ENCODE measurements at regions of chr16 and their contacts with region 1.

Region 1: DNA sequence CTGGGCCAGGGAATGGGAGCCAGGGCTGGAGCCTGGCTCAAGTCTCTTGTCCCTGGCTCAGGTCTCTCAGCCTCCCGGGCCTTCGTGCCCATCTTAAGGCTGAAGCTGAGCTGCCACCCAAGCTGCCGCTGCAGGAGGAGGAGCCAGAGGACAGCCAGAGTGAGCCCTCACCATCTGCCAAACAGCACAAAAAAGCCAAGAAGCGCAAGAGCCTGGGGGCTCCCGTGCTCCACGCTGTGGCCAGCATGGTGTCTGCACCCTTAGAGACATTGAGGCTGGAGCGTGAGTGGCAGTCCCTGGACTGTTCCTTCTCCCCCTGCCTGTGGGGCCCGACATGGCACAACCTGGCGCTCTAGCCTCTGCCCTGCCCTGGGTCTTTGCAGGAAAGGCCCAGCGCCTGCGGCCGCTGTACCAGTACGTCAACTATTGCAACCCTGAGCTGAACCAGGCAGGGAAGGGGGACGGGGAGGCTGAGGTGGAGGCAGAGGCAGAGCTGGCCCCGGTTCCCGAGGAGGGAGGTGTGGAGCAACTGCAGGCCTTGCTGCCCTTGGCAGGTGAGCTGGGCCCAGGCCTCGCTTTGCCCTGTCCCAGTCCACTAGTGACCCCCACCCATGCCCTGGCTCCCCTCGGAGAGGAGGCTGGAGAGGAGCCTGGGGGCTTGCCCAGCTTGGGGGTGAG is 1.3 kb downstream of the C16orf86 start:
- DNase-seq: peak; percentile 70
- ATAC-seq: peak; percentile 88
- H3K4me3 ChIP-seq: no peak overlapping the region
- H3K27ac ChIP-seq: no peak overlapping the region
- H3K4me1 ChIP-seq: peaks cover 34% of the 10 kb centered on the region
- H3K27me3 ChIP-seq: no peaks in the 10 kb centered on the region
- CTCF ChIP-seq: peak; percentile 91 to 94 (median 92)
- EP300 ChIP-seq: no peak
- POLR2A ChIP-seq: no peak
- RAD21 ChIP-seq: peak; percentile 67

Region 2: DNA sequence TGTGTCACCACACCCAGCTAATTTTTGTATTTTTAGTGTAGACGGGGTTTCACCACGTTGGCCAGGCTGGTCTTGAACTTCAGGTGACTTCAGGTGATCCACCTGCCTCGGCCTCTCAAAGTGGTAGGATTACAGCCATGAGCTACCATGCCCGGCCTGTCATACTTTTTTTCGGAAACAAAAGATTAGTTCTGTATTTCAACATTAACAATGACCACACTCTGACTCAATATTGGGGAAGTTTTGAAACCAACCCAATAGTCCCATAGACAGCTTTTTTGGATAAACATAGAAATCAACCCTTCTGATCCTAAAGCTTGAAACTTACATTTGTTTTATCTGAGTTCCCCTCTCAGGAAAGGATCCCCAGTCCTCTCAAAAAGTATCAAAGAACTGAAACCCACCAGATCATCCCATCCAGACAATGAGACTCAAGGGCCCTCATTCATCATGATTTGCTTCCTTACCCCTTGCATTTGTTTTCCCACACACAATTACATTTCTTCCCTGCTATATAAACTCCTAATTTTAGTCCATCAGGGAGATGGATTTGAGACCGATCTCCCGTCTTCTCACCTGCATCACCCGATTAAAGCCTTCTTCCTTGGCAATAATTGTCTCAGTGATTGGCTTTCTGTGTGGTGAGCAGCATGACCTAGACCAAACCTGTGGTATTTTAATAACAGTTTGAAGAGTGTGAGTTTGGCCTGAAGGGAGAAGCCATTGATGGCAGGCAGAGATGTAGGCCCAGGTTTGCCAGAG is 177.4 kb before region 1 on chr16:
- CTCF ChIA-PET with region 1: interaction called, 12 read pairs
- POLR2A ChIA-PET with region 1: interaction called, 3 read pairs
- RAD21 ChIA-PET with region 1: no interaction called
- SMC1A ChIA-PET with region 1: interaction called, 3 read pairs
- in situ Hi-C with region 1: no loop called
- intact Hi-C with region 1: loop called (anchors 5 kb)
- DNase-seq: no peak
- ATAC-seq: no peak
- H3K4me3 ChIP-seq: no peak overlapping the region
- H3K27ac ChIP-seq: no peak overlapping the region
- H3K4me1 ChIP-seq: peaks cover 12% of the 10 kb centered on the region
- H3K27me3 ChIP-seq: no peaks in the 10 kb centered on the region
- CTCF ChIP-seq: no peak
- EP300 ChIP-seq: no peak
- POLR2A ChIP-seq: no peak
- RAD21 ChIP-seq: no peak

Region 3: DNA sequence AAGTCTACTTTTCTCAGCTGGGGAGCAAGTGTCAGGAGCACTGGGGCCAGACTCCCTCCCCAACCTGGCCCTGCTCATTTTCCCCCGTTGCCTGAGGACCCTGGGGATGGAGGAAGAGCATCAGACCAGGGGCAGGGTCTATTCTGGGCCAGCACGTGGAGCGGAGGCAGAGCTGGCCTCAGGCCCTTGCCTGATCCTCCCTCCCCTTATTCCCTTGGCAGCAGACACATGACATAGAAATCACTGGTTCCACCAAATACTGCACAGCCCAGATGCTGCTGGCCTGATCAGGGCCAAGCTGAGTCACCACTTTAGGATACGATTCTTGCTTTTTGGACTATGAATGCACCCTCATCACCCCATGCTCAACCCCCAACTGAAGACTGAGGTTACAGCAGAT is 168.8 kb before region 1 on chr16:
- CTCF ChIA-PET with region 1: interaction called, 12 read pairs
- POLR2A ChIA-PET with region 1: no interaction called
- RAD21 ChIA-PET with region 1: no interaction called
- SMC1A ChIA-PET with region 1: no interaction called
- in situ Hi-C with region 1: no loop called
- intact Hi-C with region 1: loop called (anchors 5 kb)
- DNase-seq: no peak
- ATAC-seq: no peak
- H3K4me3 ChIP-seq: no peak overlapping the region
- H3K27ac ChIP-seq: no peak overlapping the region
- H3K4me1 ChIP-seq: no peaks in the 10 kb centered on the region
- H3K27me3 ChIP-seq: no peaks in the 10 kb centered on the region
- CTCF ChIP-seq: no peak
- EP300 ChIP-seq: no peak
- POLR2A ChIP-seq: no peak
- RAD21 ChIP-seq: no peak

Region 4: DNA sequence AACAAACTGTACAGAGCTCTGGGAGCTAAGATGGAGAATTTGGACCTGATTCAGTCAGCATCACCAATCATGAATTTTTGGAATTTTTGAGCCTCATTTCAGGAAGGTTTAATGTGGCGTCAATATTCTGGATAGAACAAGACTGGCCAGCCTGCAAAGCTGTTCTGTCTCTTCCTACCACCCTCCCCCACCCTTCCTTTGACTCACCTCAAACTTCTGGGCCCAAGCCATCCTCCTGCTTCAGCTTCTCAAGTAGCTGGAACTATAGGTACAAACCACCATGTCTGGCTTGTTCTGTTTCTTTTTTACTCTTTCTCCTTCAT is 73.0 kb before region 1 on chr16:
- CTCF ChIA-PET with region 1: no interaction called
- POLR2A ChIA-PET with region 1: no interaction called
- RAD21 ChIA-PET with region 1: no interaction called
- SMC1A ChIA-PET with region 1: no interaction called
- in situ Hi-C with region 1: no loop called
- intact Hi-C with region 1: no loop called
- DNase-seq: no peak
- ATAC-seq: no peak
- H3K4me3 ChIP-seq: no peak overlapping the region
- H3K27ac ChIP-seq: no peak overlapping the region
- H3K4me1 ChIP-seq: no peaks in the 10 kb centered on the region
- H3K27me3 ChIP-seq: no peaks in the 10 kb centered on the region
- CTCF ChIP-seq: no peak
- EP300 ChIP-seq: no peak
- POLR2A ChIP-seq: no peak
- RAD21 ChIP-seq: no peak

Region 5: GRCh38 chr16:67613808-67614207 is 54.1 kb before region 1 on chr16:
- CTCF ChIA-PET with region 1: no interaction called
- POLR2A ChIA-PET with region 1: no interaction called
- RAD21 ChIA-PET with region 1: no interaction called
- SMC1A ChIA-PET with region 1: no interaction called
- in situ Hi-C with region 1: no loop called
- intact Hi-C with region 1: no loop called
- DNase-seq: no peak
- ATAC-seq: no peak
- H3K4me3 ChIP-seq: no peak overlapping the region
- H3K27ac ChIP-seq: no peak overlapping the region
- H3K4me1 ChIP-seq: no peaks in the 10 kb centered on the region
- H3K27me3 ChIP-seq: no peaks in the 10 kb centered on the region
- CTCF ChIP-seq: peak in 1 of 3 experiments; percentile 15; a peak in 1 of 6 replicates
- EP300 ChIP-seq: no peak
- POLR2A ChIP-seq: no peak
- RAD21 ChIP-seq: no peak

Region 6: DNA sequence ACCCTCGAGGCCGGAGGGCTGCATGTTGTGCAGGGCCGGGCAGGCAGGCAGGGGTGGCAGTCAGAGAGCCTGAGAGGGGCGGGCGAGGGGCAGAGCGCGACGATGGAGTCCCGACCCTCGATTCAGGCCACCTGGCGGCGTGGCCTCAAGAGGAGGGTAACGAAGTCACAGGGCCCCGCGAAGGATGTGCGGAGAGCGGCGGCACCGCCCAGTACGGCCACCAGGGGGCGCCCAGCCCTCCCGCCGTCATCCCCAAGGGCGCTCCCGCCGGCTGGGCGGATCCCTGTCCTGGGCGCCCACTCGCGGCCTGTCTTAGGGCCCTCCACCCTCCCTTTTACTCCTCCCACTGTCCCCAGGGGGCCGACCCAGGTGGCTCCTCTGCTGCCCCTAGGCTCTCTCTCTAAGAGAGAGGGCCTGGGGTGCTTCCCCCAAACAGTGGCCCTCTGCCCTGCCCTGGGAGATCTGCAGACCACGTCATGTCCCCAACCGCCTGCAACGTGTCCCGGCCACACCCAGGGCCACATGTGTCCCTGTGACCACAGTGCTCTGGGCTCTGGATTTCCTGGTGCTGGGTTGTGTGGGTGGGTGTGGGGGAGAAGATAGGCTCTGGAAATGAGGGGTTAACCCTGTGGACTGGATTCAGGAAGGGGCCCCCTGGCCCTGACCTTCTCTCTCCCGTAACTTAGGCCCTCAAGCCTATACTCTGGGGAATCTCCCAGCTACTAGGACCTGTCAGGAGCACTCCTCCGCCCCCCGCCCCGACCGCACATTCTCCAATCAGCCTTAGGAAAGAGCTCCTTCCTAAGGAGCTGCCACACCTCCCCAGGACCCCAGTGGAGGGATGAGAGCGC is 325.5 kb after region 1 on chr16:
- CTCF ChIA-PET with region 1: no interaction called
- POLR2A ChIA-PET with region 1: no interaction called
- RAD21 ChIA-PET with region 1: no interaction called
- SMC1A ChIA-PET with region 1: no interaction called
- in situ Hi-C with region 1: no loop called
- intact Hi-C with region 1: no loop called
- DNase-seq: no peak
- ATAC-seq: peak; percentile 92
- H3K4me3 ChIP-seq: peak overlapping the region; percentile 24; the same call in 1 of the 2 replicates
- H3K27ac ChIP-seq: peak overlapping the region; percentile 64
- H3K4me1 ChIP-seq: peaks cover 39% of the 10 kb centered on the region
- H3K27me3 ChIP-seq: no peaks in the 10 kb centered on the region
- CTCF ChIP-seq: peak; percentile 92 to 95 (median 94)
- EP300 ChIP-seq: no peak
- POLR2A ChIP-seq: peak; percentile 70
- RAD21 ChIP-seq: peak; percentile 52

Region 7: DNA sequence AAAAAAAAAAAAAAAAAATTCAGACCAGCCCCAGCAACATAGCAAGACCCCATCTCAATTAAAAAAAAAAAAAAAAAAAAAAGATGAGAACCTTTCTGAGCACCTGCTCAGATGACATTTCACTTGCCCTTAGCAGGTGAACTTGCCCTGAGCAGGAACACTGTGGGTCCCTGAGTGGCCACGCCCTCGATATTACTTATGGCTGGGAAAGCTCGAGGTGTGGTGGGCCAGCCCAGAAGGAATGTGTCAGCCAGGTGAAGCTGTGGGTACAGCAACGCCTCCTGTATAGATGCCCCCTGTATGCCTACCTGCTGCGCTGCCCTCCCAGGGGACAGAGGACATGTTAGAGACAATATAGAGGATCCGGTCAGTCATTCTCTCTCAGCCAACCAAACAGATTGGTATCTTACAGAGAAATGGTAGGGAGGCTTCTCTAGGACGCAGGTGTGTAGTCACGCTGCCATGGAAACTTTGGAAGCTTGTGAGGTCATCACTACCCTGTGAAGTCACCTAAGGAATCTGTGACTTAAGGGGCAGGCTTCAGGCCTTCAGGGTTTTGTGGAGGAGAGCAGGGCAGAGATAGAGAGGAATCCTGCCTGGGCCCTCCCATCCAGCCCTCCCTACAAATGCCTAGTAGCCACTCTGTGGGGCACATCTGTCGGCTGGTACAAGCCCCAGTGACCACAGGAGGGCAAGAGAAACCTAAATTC is 347.6 kb after region 1 on chr16 and contains the start of gene DPEP2NB:
- CTCF ChIA-PET with region 1: interaction called, 3 read pairs
- POLR2A ChIA-PET with region 1: interaction called, 12 read pairs
- RAD21 ChIA-PET with region 1: no interaction called
- SMC1A ChIA-PET with region 1: no interaction called
- in situ Hi-C with region 1: no loop called
- intact Hi-C with region 1: no loop called
- DNase-seq: no peak
- ATAC-seq: no peak
- H3K4me3 ChIP-seq: no peak within 1 kb of the TSS
- H3K27ac ChIP-seq: no peak within 1 kb of the TSS
- H3K4me1 ChIP-seq: no peaks in the 10 kb centered on the region
- H3K27me3 ChIP-seq: no peaks in the 10 kb centered on the region
- CTCF ChIP-seq: no peak
- EP300 ChIP-seq: no peak
- POLR2A ChIP-seq: no peak
- RAD21 ChIP-seq: no peak
- polyA plus RNA-seq, gene DPEP2NB: not detected